A549 (cell line): ENCODE measurements at regions of chr9 and their contacts with region 1.

Region 1: DNA sequence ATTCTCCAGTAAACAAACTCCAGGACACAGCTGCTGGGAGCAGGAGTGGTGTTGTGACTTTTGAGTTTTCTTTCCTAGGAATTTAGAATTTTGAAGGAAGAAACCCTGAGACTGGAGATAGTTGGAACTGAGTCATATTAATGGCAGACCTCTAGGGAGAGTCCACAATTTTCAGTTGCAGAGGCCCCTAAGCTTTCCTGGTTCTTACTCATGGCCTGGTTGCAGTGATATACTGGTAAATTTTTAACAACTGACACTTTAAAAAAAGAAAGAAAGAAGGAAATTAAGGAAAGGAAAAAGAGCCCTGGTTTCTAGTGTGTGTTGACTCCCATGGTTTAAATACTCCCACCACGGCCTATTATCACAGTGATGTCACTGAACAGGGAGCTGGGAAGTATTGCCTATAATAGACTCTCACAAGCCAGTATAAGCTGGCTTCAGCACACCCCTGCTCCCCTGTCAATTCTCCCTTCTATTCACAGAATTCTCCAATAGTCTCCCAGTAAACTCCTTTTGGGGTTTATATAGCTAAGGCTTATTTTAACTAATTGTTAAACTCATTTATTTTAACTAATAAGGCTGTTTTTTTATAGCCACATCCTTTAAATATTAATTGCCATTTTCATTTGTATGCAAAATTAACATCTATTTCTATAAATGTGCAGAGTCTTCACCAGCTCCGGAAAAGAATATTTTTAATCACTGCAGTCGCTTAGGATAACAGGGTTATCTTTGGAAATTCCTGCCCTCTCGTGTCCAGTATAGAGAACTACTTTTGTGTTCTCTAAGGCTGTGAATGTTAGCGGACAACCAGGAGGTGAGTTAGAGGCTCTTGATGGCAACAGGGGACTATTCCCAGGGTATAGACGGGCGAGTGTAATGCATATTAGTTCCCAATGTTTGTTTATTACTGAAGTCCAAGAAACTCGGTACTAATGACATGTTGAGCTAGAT is 59.7 kb downstream of the GGTA1 start:
- DNase-seq: peak; percentile 49 to 70
- ATAC-seq: peak; percentile 92 to 97
- H3K4me3 ChIP-seq: no peak overlapping the region
- H3K27ac ChIP-seq: no peak overlapping the region
- H3K4me1 ChIP-seq: no peaks in the 10 kb centered on the region
- CTCF ChIP-seq: peak; percentile 40
- EP300 ChIP-seq: no peak
- POLR2A ChIP-seq: no peak
- RAD21 ChIP-seq: peak; percentile 33 to 41; a peak in 2 of 5 replicates

Region 2: GRCh38 chr9:120928483-120929228 is 511.3 kb before region 1 on chr9:
- CTCF ChIA-PET with region 1: no interaction called
- POLR2A ChIA-PET with region 1: no interaction called
- DNase-seq: peak; percentile 57 to 78
- ATAC-seq: peak; percentile 85 to 93
- H3K4me3 ChIP-seq: peak overlapping the region; percentile 77
- H3K27ac ChIP-seq: peak overlapping the region; percentile 89 to 97
- H3K4me1 ChIP-seq: peaks cover 26% of the 10 kb centered on the region
- CTCF ChIP-seq: no peak
- EP300 ChIP-seq: no peak
- POLR2A ChIP-seq: peak; percentile 73
- RAD21 ChIP-seq: 0 out of 5 replicates have a peak, but pooled peaks of 1 of the 2 experiments have one; percentile 10

Region 3: GRCh38 chr9:121455527-121456239 is 15.7 kb after region 1 on chr9:
- CTCF ChIA-PET with region 1: interaction called, 39 read pairs
- POLR2A ChIA-PET with region 1: no interaction called
- DNase-seq: no peak
- ATAC-seq: no peak
- H3K4me3 ChIP-seq: no peak overlapping the region
- H3K27ac ChIP-seq: no peak overlapping the region
- H3K4me1 ChIP-seq: no peaks in the 10 kb centered on the region
- CTCF ChIP-seq: no peak
- EP300 ChIP-seq: no peak
- POLR2A ChIP-seq: no peak
- RAD21 ChIP-seq: no peak

Region 4: GRCh38 chr9:121463026-121463807 is 23.2 kb after region 1 on chr9:
- CTCF ChIA-PET with region 1: interaction called, 10 read pairs
- POLR2A ChIA-PET with region 1: no interaction called
- DNase-seq: peak; percentile 24 to 30
- ATAC-seq: peak; percentile 40 to 72; a peak in 4 of 6 replicates
- H3K4me3 ChIP-seq: no peak overlapping the region
- H3K27ac ChIP-seq: no peak overlapping the region
- H3K4me1 ChIP-seq: no peaks in the 10 kb centered on the region
- CTCF ChIP-seq: peak; percentile 39
- EP300 ChIP-seq: no peak
- POLR2A ChIP-seq: no peak
- RAD21 ChIP-seq: no peak

Region 5: GRCh38 chr9:122125158-122125508 is 685.1 kb after region 1 on chr9:
- CTCF ChIA-PET with region 1: no interaction called
- POLR2A ChIA-PET with region 1: no interaction called
- DNase-seq: peak; percentile 71 to 87
- ATAC-seq: peak; percentile 83 to 91
- H3K4me3 ChIP-seq: no peak overlapping the region
- H3K27ac ChIP-seq: peak overlapping the region; percentile 7 to 38; a peak in 2 of 6 replicates
- H3K4me1 ChIP-seq: peaks cover 10% of the 10 kb centered on the region; the same call in 2 of the 3 replicates
- CTCF ChIP-seq: peak; percentile 95
- EP300 ChIP-seq: no peak
- POLR2A ChIP-seq: no peak
- RAD21 ChIP-seq: peak; percentile 97 to 98